ENCODE measurements at regions of chr3 and their contacts with region 1.

Region 1: DNA sequence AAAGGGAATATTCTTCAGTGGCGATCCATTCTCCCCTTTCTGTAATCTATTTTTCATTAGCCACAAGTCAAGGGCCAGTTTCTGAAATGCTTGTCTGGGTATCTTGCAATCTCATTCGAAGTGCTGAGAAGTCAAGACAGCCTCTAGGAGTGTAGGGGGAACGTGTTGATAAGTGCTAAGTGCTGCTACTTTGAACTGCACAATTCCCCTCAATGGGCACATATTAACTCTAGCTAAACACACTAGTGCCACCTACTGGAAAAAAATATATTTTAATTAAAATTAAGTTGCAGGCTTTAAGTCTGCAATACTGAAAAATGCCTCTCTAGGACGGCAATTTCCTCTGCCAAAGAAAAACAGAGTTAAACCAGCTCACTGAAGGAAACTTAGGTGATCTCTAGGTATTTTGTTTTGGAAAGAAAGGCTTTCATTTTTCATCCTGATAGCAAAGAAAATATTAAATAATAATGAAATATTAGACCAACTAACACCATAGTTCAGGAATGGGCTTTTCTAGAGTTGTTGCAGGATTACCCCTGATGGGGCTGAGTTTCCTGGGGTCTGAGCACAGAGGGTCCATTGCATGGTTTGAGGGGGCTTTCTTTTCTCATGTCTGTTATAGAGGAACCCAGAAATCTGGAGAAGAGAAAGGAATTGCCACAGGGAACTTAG is 181.9 kb upstream of the KBTBD8 start:
- DNase-seq: no peak

Region 2: DNA sequence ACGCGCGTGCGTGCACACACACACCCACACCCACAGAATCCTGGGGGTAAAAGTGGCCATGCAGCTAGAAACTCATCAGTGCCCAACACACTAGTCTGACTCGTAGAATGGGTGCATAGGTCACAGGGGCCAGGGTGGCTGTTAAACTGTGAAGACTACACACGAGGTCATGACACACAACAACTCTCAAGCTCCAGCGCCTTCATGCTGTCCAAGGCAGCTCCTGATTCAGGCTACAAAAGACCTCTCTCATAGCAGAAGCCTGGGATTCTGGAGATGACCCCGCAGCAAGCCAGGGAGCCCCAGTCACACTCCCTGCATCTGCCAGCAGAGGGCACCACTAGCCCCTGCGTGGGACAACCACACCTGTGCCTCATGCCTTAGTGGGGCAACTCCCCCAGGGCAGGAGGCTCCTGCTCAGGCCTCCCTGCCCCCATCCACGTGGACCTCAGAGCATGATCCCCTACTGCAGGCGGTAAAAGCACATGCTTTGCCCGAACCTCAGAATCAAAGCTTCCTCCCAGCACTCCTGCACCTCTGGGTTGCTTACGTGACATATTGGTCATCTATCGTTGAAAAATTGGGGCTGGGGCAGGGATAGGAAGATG is 408.5 kb before region 1 on chr3:
- intact Hi-C with region 1: loop called (anchors 5 kb)
- DNase-seq: peak in 8 of 10 donors; percentile 72 to 95 (median 81)

Region 3: DNA sequence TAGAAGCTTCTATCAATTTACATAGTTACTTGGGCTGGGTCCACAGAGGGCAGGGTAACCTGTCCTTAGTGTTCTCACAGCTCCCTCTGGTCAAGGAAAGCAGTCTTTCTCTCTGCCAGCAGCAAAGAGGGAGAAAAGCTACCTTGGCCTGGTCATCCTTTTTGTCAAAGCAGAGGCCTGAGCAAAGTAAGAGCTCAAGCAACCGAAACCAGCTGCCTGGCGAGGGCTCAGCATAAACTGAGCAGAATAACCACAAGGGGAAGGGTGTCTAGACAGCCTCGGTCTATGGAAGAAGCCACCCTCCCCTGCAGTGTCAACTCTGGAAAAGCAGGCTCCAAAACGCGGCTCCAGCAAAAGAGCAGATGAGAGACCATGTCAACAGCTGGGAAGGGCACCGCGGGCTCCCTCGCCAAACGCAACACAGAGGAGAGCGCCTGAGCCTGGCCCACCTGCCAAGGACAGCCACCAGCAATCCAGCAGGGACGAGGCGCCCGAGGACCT is 332.8 kb before region 1 on chr3:
- intact Hi-C with region 1: loop called (anchors 5 kb)
- DNase-seq: peak in 9 of 10 donors; percentile 17 to 89 (median 40)